ENCODE measurements at regions of chr18 and their contacts with region 1.

Region 1: DNA sequence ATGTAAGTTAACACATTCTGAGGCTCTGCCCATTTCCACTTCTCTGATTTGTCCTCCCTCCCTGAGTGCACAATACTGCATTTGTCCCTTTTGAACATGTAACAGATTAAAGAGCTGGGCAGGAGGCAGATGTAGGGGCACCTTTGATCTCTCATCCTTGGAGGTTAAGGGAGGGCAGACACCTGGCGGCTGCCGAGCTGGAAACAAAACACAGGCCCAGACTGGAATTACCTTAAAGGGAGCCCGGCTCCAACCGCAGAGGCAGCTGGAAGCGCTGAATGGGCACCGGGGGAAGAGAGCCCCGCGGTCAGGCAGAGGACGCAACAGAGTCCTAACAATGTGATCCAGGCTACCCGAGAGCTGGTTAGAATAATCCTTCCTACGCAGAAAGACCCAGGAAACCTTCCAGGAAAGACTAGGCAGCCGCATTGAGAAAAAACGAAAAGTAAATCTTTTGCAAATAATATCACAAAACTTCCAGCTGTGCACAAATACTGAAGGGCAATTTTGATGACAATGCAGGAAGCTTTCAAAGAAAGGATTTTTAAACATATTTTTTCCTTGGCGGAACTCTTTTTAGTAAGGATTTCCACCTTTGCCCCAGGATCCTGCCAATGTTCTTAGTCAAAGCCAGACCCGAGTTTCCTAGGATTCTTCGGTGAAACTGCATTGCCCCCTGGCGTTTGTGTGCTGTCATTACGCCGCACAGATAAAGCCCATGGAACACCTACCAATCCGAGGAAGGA is 216.0 kb downstream of the TGIF1 start:
- DNase-seq: peak; percentile 85
- ATAC-seq: peak; percentile 89
- H3K4me3 Mint-ChIP-seq: peak overlapping the region; percentile 65
- H3K27ac Mint-ChIP-seq: peak overlapping the region; percentile 98
- H3K4me1 Mint-ChIP-seq: peaks cover 27% of the 10 kb centered on the region
- H3K27me3 Mint-ChIP-seq: no peaks in the 10 kb centered on the region
- CTCF ChIP-seq: peak; percentile 94

Region 2: GRCh38 chr18:3119401-3120335 is 546.3 kb before region 1 on chr18:
- CTCF ChIA-PET with region 1: no interaction called
- POLR2A ChIA-PET with region 1: no interaction called
- DNase-seq: no peak
- ATAC-seq: no peak
- H3K4me3 Mint-ChIP-seq: no peak overlapping the region
- H3K27ac Mint-ChIP-seq: no peak overlapping the region
- H3K4me1 Mint-ChIP-seq: peaks cover 19% of the 10 kb centered on the region
- H3K27me3 Mint-ChIP-seq: peaks cover 16% of the 10 kb centered on the region
- CTCF ChIP-seq: no peak

Region 3: DNA sequence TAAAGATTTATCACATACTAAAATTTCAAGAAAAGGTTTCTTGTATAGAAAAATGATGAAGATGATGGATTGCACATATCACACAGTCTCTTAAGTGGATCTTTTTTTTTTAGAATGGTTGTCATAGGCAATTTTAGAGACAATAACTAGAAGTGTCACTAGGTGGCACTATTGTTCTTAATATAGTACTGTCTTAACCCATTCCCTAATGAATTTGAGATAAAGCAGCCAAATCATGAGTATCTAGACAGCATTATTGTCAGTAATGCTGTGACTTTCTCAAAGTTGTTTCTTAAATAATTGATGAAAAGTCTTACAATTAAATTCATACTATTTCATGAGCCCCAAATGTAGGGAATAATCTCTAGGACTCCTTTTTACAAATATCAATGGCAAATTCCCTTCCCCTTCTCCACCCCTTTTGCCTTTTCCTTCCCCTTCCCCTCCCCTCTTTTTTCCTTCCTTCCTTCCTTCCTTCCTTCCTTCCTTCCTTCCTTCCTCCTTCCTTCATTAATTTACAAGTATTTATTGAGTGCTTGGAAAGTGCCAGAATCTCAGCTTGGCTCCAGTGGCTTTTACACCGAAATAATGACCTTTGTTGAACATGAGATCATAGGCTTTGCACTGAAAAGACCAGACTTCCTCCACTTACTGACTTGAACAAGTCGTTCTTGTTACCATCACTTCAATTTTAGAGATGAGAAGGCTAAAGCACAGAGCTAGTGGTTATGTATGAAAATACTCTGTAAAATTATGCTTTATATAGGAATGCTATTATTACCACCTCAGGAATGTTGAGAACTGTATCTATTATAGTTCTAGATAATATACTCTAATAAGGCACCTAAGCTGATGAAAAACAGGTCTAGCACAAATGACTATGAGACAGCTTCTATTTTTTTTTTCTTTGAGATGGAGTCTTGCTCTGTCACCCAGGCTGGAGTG is 384.2 kb before region 1 on chr18:
- CTCF ChIA-PET with region 1: interaction called, 47 read pairs
- POLR2A ChIA-PET with region 1: interaction called, 4 read pairs
- DNase-seq: no peak
- ATAC-seq: peak; percentile 51
- H3K4me3 Mint-ChIP-seq: no peak overlapping the region
- H3K27ac Mint-ChIP-seq: no peak overlapping the region
- H3K4me1 Mint-ChIP-seq: peaks cover 52% of the 10 kb centered on the region
- H3K27me3 Mint-ChIP-seq: no peaks in the 10 kb centered on the region
- CTCF ChIP-seq: peak; percentile 62

Region 4: DNA sequence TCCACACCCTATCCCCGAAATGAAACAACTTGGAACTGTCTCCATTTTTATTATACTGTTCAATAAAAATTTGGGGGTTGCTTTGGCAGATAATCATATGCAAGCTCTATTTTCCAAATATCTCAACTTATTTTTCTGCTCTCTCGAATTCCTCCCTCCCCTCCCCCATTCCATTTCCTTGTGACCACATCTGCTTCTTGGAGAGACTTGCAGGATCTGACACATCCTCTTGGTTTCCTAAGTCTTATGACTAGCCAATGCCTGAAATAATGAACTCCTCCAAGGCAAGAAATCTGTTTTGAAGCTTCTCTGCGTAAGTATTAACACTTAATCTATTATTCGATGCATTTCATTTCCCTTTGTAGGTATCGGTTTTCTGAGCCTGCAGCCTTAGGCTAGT is 199.9 kb before region 1 on chr18:
- CTCF ChIA-PET with region 1: interaction called, 15 read pairs
- POLR2A ChIA-PET with region 1: no interaction called
- DNase-seq: no peak
- ATAC-seq: no peak
- H3K4me3 Mint-ChIP-seq: no peak overlapping the region
- H3K27ac Mint-ChIP-seq: peak overlapping the region; percentile 97
- H3K4me1 Mint-ChIP-seq: peaks cover 52% of the 10 kb centered on the region
- H3K27me3 Mint-ChIP-seq: no peaks in the 10 kb centered on the region
- CTCF ChIP-seq: no peak

Region 5: GRCh38 chr18:3593904-3594661 is 71.9 kb before region 1 on chr18:
- CTCF ChIA-PET with region 1: interaction called, 92 read pairs
- POLR2A ChIA-PET with region 1: interaction called, 14 read pairs
- DNase-seq: peak; percentile 91
- ATAC-seq: peak; percentile 81
- H3K4me3 Mint-ChIP-seq: peak overlapping the region; percentile 62
- H3K27ac Mint-ChIP-seq: peak overlapping the region; percentile 95
- H3K4me1 Mint-ChIP-seq: peaks cover 81% of the 10 kb centered on the region
- H3K27me3 Mint-ChIP-seq: peaks cover 28% of the 10 kb centered on the region
- CTCF ChIP-seq: peak; percentile 69; the same call in 1 of the 2 replicates

Region 6: GRCh38 chr18:3634250-3634939 is 31.6 kb before region 1 on chr18:
- CTCF ChIA-PET with region 1: interaction called, 11 read pairs
- POLR2A ChIA-PET with region 1: no interaction called
- DNase-seq: no peak
- ATAC-seq: no peak
- H3K4me3 Mint-ChIP-seq: no peak overlapping the region
- H3K27ac Mint-ChIP-seq: no peak overlapping the region
- H3K4me1 Mint-ChIP-seq: peaks cover 5% of the 10 kb centered on the region
- H3K27me3 Mint-ChIP-seq: no peaks in the 10 kb centered on the region
- CTCF ChIP-seq: no peak

Region 7: GRCh38 chr18:3683483-3683882 is 17.5 kb after region 1 on chr18:
- CTCF ChIA-PET with region 1: interaction called, 13 read pairs
- POLR2A ChIA-PET with region 1: no interaction called
- DNase-seq: no peak
- ATAC-seq: no peak
- H3K4me3 Mint-ChIP-seq: no peak overlapping the region
- H3K27ac Mint-ChIP-seq: no peak overlapping the region
- H3K4me1 Mint-ChIP-seq: peaks cover 10% of the 10 kb centered on the region
- H3K27me3 Mint-ChIP-seq: no peaks in the 10 kb centered on the region
- CTCF ChIP-seq: no peak